Natural killer cell (primary cell): ENCODE measurements at regions of chr9 and their contacts with region 1.

Region 1: DNA sequence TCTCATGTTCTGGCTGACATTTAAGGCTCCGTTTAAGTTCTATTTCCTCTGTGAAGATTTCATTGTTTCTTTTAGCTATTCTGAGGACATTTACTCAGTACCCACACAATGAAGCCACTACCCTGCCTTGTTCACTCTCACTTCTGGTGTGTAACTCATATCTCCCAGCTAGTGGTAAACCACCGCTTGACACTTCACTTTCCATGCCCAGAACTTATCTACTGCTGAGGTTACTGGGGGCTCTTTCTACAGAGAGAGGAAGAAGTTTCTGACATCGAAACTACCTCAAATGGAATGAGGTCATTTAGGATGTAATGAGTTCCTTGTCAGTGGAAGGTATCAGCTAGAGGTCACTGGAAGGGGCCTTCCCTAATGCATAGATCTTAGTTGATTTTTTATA is 501.5 kb downstream of the DMAC1 start:
- DNase-seq: peak in 1 of 2 donors; percentile 13
- ATAC-seq: peak; percentile 69 to 92 (median 76)
- H3K4me3 ChIP-seq: no peak overlapping the region
- H3K4me3 Mint-ChIP-seq: peak overlapping the region; percentile 21
- H3K27ac ChIP-seq: peak overlapping the region; percentile 37
- H3K27ac Mint-ChIP-seq: peak overlapping the region; percentile 17 to 60
- H3K4me1 ChIP-seq: peaks cover 9% of the 10 kb centered on the region
- H3K4me1 Mint-ChIP-seq: peaks cover 26 to 34% of the 10 kb centered on the region in 2 donors
- H3K27me3 ChIP-seq: peaks cover 5% of the 10 kb centered on the region
- H3K27me3 Mint-ChIP-seq: peaks cover 13 to 31% of the 10 kb centered on the region in 2 donors
- CTCF ChIP-seq: no peak

Region 2: GRCh38 chr9:7121055-7121454 is 177.1 kb before region 1 on chr9:
- intact Hi-C with region 1: loop called (anchors 2 kb)
- DNase-seq: peak; percentile 22 to 48
- ATAC-seq: peak; percentile 88 to 94 (median 92)
- H3K4me3 ChIP-seq: no peak overlapping the region
- H3K4me3 Mint-ChIP-seq: peak overlapping the region; percentile 87
- H3K27ac ChIP-seq: peak overlapping the region; percentile 60
- H3K27ac Mint-ChIP-seq: peak overlapping the region; percentile 91 to 92
- H3K4me1 ChIP-seq: peaks cover 10% of the 10 kb centered on the region
- H3K4me1 Mint-ChIP-seq: peaks cover 44 to 53% of the 10 kb centered on the region in 2 donors
- H3K27me3 ChIP-seq: no peaks in the 10 kb centered on the region
- H3K27me3 Mint-ChIP-seq: no peaks in the 10 kb centered on the region
- CTCF ChIP-seq: no peak

Region 3: DNA sequence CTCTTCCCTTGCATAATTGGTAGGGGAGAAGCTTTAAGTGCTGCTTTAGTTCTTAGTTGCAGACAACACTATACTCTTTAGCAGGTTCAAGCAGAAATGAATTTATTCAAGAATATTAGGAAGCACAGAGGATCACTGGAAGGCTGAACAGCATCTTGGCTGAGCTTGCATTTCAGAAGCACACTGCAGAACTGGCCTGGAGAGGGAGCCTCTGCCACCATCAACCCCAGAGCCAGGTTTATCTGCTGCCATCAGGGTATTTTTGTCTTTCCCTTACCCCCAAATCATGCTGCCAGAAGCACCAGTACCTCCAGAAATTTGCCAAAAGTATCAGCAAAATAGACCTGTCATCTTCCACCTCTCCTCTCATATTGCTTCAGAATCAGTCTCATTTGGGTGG is 60.8 kb after region 1 on chr9:
- intact Hi-C with region 1: no loop called
- DNase-seq: no peak
- ATAC-seq: no peak
- H3K4me3 ChIP-seq: no peak overlapping the region
- H3K4me3 Mint-ChIP-seq: no peak overlapping the region
- H3K27ac ChIP-seq: no peak overlapping the region
- H3K27ac Mint-ChIP-seq: no peak overlapping the region
- H3K4me1 ChIP-seq: no peaks in the 10 kb centered on the region
- H3K4me1 Mint-ChIP-seq: no peaks in the 10 kb centered on the region
- H3K27me3 ChIP-seq: peaks cover 2% of the 10 kb centered on the region
- H3K27me3 Mint-ChIP-seq: peaks cover 11 to 35% of the 10 kb centered on the region in 2 donors
- CTCF ChIP-seq: no peak